ENCODE measurements at regions of chr9 and their contacts with region 1.

Region 1: GRCh38 chr9:35096035-35096849 is at the start of gene PIGO:
- DNase-seq: peak; percentile 83 to 94 (median 88)
- ATAC-seq: peak; percentile 90 to 92
- H3K4me3 Mint-ChIP-seq: peak within 1 kb of the TSS; percentile 83 to 93 (median 87)
- H3K27ac Mint-ChIP-seq: peak within 1 kb of the TSS; percentile 86 to 98 (median 95)
- H3K4me1 Mint-ChIP-seq: peaks cover 18 to 51% (median 37%) of the 10 kb centered on the region in 4 donors
- H3K27me3 Mint-ChIP-seq: no peaks in the 10 kb centered on the region
- polyA plus RNA-seq, gene PIGO: 23.0 to 26.2 (median 23.3) TPM

Region 2: DNA sequence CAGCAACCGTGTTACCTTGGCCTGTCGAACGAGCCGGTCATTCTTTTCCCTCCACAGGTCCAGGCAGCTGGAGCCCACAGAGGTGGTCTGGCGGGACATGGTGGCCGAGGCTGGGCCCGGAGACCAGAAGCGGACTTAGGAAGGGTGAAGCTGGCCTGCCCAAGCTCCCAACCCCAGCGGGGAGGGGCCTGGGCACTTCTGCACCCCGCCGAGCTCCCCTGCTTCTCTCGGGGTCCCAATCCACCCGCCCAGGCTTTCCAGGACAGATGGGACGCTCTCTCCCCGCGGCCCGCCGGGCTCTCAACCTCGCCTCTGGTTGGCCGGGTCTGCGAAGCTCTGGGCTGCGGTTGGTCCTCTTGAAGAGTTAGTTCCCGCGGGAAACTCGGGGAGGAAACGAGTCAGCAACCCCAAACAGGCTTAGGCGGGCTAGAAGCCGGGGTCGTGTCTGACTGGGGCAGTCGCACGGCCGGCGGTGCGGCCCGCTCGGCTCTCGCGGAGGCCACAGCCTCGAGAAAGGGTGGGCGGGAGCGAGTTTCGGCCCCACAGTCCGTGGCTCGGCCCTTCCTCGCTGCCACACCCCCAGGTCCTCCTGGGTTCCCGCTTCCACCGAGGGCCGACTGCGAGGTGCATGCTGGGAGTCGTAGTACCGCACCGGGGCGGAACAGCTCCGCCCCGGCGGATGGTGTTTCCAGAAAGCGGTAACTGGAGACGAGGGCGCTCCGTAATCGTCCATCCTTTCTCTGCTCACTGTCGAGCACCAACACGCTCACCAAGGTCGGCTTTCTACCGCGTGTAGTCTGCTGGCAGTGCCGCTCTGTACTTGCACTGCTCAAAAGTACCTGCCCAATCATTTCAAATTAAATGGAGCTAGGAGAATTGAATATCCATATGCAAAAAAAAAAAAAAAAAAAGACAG is 16.6 kb before region 1 on chr9 and contains the start of gene FANCG:
- POLR2A ChIA-PET with region 1: interaction called, 52 read pairs
- DNase-seq: peak; percentile 58 to 83 (median 72)
- ATAC-seq: peak; percentile 94
- H3K4me3 Mint-ChIP-seq: peak within 1 kb of the TSS; percentile 90 to 96 (median 95)
- H3K27ac Mint-ChIP-seq: peak within 1 kb of the TSS; percentile 75 to 95 (median 90)
- H3K4me1 Mint-ChIP-seq: peaks cover 13 to 29% (median 20%) of the 10 kb centered on the region in 4 donors
- H3K27me3 Mint-ChIP-seq: no peaks in the 10 kb centered on the region
- polyA plus RNA-seq, gene FANCG: 4.4 to 9.3 (median 5.9) TPM

Region 3: GRCh38 chr9:35111001-35111933 is 15.0 kb after region 1 on chr9:
- POLR2A ChIA-PET with region 1: interaction called, 29 read pairs
- DNase-seq: peak; percentile 83 to 98 (median 93)
- ATAC-seq: peak; percentile 71 to 82
- H3K4me3 Mint-ChIP-seq: peak overlapping the region; percentile 73 to 92 (median 84)
- H3K27ac Mint-ChIP-seq: peak overlapping the region; percentile 26 to 93 (median 90)
- H3K4me1 Mint-ChIP-seq: peaks cover 40 to 63% (median 57%) of the 10 kb centered on the region in 4 donors
- H3K27me3 Mint-ChIP-seq: no peaks in the 10 kb centered on the region

Measured in naive thymus-derived CD8-positive, alpha-beta T cell (primary cell).